ENCODE measurements at regions of chr17 and their contacts with region 1.

Region 1: GRCh38 chr17:4354862-4355514 is 11.5 kb downstream of the UBE2G1 start:
- DNase-seq: no peak
- ATAC-seq: no peak
- H3K4me3 ChIP-seq: no peak overlapping the region
- H3K27ac ChIP-seq: no peak overlapping the region
- H3K4me1 ChIP-seq: no peaks in the 10 kb centered on the region
- H3K27me3 ChIP-seq: no peaks in the 10 kb centered on the region
- CTCF ChIP-seq: no peak
- POLR2A ChIP-seq: no peak
- RAD21 ChIP-seq: no peak

Region 2: DNA sequence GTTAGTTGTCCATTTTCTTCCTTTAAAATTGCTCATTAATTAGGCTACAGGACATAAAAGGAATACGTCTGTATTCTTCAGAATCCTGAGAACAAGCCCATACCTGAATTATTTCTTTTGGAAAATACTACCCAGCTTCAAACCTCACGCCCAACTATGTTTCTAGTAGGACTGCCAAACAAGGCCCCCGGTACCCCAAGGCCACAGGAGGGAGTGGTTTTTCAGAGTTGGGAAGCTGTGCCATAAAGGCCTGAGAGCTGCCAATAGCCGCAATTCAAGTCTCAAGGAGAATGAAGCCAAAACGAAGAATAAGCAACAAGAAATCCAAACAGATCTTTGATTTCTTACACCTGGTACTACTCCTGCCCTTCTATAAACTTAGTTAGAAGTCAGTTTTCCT is 36.8 kb before region 1 on chr17:
- CTCF ChIA-PET with region 1: no interaction called
- POLR2A ChIA-PET with region 1: no interaction called
- dilution Hi-C with region 1: no loop called
- in situ Hi-C with region 1: no loop called
- intact Hi-C with region 1: loop called (anchors 5 kb)
- DNase-seq: no peak
- ATAC-seq: no peak
- H3K4me3 ChIP-seq: no peak overlapping the region
- H3K27ac ChIP-seq: no peak overlapping the region
- H3K4me1 ChIP-seq: peaks cover 8% of the 10 kb centered on the region
- H3K27me3 ChIP-seq: no peaks in the 10 kb centered on the region
- CTCF ChIP-seq: no peak
- POLR2A ChIP-seq: no peak
- RAD21 ChIP-seq: no peak

Region 3: GRCh38 chr17:4334776-4335584 is 20.0 kb before region 1 on chr17:
- CTCF ChIA-PET with region 1: no interaction called
- POLR2A ChIA-PET with region 1: no interaction called
- dilution Hi-C with region 1: no loop called
- in situ Hi-C with region 1: no loop called
- intact Hi-C with region 1: loop called (anchors 2 kb)
- DNase-seq: no peak
- ATAC-seq: no peak
- H3K4me3 ChIP-seq: no peak overlapping the region
- H3K27ac ChIP-seq: no peak overlapping the region
- H3K4me1 ChIP-seq: peaks cover 5% of the 10 kb centered on the region; the same call in 1 of the 2 replicates
- H3K27me3 ChIP-seq: no peaks in the 10 kb centered on the region
- CTCF ChIP-seq: no peak
- POLR2A ChIP-seq: no peak
- RAD21 ChIP-seq: no peak

Measured in IMR-90 (cell line).